GM10248 (cell line): ENCODE measurements at regions of chr3 and their contacts with region 1.

Region 1: DNA sequence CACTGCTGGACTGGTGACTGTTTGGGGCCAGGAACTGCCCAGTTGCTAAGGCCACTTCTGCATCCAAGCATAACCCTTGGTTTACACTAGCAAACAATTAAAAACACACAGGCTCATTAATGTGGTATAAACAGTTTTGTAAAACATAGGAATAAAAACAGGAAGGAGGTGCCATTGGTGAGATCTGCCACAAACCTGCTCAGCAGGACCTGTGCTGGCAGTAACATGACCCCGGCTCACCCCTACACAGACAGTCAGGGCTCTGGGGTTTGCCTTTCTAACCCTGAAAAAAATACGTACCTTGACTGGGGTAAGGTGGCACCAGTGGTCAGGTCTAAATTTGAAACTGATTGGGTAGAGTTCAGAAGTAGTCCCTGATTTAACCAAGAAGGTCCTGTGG is 76.2 kb downstream of the ATP1B3 start:
- DNase-seq: no peak
- CTCF ChIP-seq: no peak

Region 2: DNA sequence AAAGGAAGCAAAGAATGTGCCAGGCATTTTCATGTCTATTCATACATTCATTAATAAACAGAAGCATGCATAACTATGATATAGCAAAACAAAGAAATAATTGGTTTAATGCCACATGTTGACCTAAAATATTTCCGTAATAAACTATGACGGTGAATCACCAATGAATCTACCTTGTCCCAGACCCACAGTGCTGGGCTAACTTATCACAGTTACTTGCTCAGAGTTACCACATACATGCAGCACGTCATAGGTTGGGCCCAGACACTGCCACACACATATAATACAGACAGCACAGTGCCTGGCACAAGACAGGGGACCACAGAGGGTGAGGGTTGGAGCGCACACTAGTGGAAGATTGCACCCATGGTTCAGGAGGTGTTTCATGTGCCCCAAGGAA is 10.7 kb after region 1 on chr3:
- CTCF ChIA-PET with region 1: interaction called, 17 read pairs
- POLR2A ChIA-PET with region 1: no interaction called
- DNase-seq: no peak
- CTCF ChIP-seq: no peak

Region 3: DNA sequence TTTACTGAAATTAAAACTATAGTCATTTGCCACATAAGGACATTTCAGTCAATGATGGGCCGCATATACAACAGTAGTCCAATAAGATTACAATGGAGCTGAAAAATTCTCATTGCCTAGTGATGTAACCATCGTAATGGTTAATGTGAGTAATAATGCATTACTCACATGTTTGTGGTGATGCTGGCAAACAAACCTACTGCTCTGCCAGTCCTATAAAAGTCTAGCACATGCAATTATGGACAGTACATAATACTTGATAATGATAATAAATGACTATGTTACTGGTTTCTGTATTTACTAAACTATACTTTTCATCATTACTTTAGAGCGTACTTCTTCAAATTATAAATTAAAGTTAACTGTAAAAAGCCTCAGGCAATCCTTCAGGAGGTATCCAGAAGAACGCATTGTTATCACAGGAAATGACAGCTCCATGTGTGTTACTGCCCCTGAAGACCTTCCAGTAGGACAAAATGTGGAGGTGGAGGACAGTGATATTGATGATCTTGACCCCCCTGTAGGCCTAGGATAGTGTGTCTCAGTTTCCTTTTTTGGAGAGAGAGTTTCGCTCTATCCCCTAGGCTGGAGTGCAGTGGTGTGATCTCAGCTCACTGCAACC is 26.6 kb after region 1 on chr3:
- CTCF ChIA-PET with region 1: no interaction called
- POLR2A ChIA-PET with region 1: no interaction called
- DNase-seq: no peak
- CTCF ChIP-seq: no peak